ENCODE measurements at regions of chr2 and their contacts with region 1.

Region 1: GRCh38 chr2:179467111-179467510 is 202.5 kb upstream of the SESTD1 start:
- DNase-seq: peak; percentile 60
- H3K4me3 ChIP-seq: no peak overlapping the region
- H3K27ac ChIP-seq: peak overlapping the region; percentile 24
- H3K4me1 ChIP-seq: peaks cover 7% of the 10 kb centered on the region
- H3K27me3 ChIP-seq: no peaks in the 10 kb centered on the region
- CTCF ChIP-seq: no peak
- POLR2A ChIP-seq: no peak

Region 2: DNA sequence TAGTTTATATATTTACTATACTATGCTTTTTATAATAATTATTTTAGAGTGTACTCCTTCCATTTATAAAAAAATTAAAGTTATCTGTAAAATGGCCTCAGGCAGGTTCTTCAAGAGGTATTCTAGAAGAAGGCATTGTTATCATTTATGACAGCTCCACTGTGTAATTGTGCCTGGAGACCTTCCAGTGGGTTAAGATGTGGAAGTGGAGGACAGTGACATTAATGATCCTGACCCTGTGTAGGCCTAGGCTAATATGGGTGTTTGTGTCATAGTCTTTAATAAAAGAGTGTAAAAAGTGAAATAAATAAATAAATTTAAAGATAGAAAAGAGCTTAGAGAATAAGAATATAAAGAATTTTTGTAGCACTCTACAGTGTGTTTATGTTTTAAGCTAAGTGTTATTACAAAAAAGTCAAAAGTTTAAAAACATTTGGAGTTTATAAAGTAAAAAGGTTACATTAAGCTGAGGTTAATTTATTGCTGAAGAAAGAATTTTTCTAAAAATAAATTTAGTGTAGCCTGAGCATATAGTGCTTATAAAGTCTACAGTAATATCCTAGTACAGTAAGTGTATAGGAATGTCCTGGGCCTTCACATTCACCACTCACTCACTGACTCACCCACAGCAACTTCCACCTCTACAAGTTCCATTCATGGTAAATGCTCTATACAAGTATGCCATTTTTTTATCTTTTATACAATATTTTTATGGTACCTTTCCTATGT is 12.5 kb before region 1 on chr2:
- CTCF ChIA-PET with region 1: interaction called, 19 read pairs
- POLR2A ChIA-PET with region 1: no interaction called
- dilution Hi-C with region 1: no loop called
- intact Hi-C with region 1: no loop called
- DNase-seq: peak; percentile 72
- H3K4me3 ChIP-seq: no peak overlapping the region
- H3K27ac ChIP-seq: peak overlapping the region; percentile 60
- H3K4me1 ChIP-seq: peaks cover 9% of the 10 kb centered on the region
- H3K27me3 ChIP-seq: no peaks in the 10 kb centered on the region
- CTCF ChIP-seq: no peak
- POLR2A ChIP-seq: no peak

Region 3: GRCh38 chr2:179626261-179626660 is 159.2 kb after region 1 on chr2:
- CTCF ChIA-PET with region 1: no interaction called
- POLR2A ChIA-PET with region 1: no interaction called
- dilution Hi-C with region 1: no loop called
- intact Hi-C with region 1: no loop called
- DNase-seq: no peak
- H3K4me3 ChIP-seq: no peak overlapping the region
- H3K27ac ChIP-seq: no peak overlapping the region
- H3K4me1 ChIP-seq: no peaks in the 10 kb centered on the region
- H3K27me3 ChIP-seq: no peaks in the 10 kb centered on the region
- CTCF ChIP-seq: no peak
- POLR2A ChIP-seq: no peak

Region 4: DNA sequence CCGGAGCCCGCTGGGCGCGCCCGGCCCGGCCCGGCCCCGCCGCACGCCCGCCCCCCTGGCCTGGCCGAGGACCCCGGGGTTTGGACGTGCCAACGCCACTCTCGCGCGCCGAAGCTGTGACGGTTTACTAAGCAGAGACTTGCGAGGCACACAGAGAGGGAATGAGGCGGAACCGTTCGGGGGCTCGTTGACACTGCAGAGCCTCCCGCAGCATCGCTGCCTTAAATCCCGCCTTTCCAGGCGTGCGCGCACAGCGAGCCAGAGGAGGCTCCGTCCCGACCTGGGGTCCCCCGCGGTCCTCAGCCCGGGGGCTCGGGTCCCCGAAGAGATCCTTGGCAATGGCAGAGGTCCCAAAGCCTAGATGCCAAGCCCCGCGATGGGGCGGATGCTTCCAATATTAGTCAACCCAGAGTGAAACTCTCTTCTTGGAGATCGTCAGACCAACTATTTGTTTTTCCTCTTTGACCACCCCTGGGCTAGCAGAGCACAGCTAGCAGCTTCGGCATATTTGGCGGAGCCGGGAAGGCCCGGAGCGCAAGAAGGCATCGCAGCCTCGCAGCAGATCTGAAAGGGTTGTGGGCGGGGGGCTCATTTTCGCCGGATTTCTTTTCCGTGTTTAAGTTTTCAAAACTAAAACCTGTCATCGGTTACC is 394.4 kb after region 1 on chr2 and contains the start of gene ZNF385B:
- CTCF ChIA-PET with region 1: no interaction called
- POLR2A ChIA-PET with region 1: no interaction called
- dilution Hi-C with region 1: no loop called
- intact Hi-C with region 1: no loop called
- DNase-seq: peak; percentile 5
- H3K4me3 ChIP-seq: peak within 1 kb of the TSS; percentile 26 to 31 (median 26)
- H3K27ac ChIP-seq: no peak within 1 kb of the TSS
- H3K4me1 ChIP-seq: no peaks in the 10 kb centered on the region
- H3K27me3 ChIP-seq: peaks cover 50 to 59% of the 10 kb centered on the region in 2 experiments
- CTCF ChIP-seq: no peak
- POLR2A ChIP-seq: no peak
- total RNA-seq, gene ZNF385B: not detected in 2 replicates

Measured in endothelial cell of umbilical vein (primary cell).